H1 (cell line): ENCODE measurements at regions of chr13 and their contacts with region 1.

Region 1: DNA sequence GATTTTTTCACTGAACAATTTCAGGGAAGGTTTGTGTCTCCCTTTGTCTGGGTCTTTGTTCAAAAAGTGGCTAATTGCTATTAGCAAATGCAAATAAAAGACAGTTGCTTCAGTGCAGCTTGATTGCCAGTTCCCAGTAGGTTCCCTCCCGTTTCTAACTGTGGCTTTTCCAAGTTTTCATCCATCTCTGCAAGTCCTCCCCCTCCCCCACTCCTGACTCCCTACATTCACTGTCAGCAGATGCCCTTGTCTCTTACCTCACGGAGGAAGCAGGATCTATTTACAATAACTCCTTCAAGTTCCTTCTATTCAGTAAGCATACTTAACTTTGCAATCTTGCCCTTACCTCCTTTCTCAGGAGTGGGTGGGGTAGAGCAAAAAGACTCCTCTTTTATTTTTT is 55.4 kb upstream of the SCEL start:
- DNase-seq: peak in 1 of 2 experiments; percentile 9
- H3K4me3 ChIP-seq: no peak overlapping the region
- H3K27ac ChIP-seq: no peak overlapping the region
- H3K4me1 ChIP-seq: peaks cover 2 to 5% (median 4%) of the 10 kb centered on the region in 4 experiments; a peak in 4 of 7 replicates
- H3K27me3 ChIP-seq: no peaks in the 10 kb centered on the region
- CTCF ChIP-seq: no peak
- EP300 ChIP-seq: no peak
- POLR2A ChIP-seq: no peak
- RAD21 ChIP-seq: no peak

Region 2: GRCh38 chr13:77316430-77316829 is 163.6 kb before region 1 on chr13:
- CTCF ChIA-PET with region 1: interaction called, 12 read pairs
- POLR2A ChIA-PET with region 1: interaction called, 3 read pairs
- DNase-seq: no peak
- H3K4me3 ChIP-seq: no peak overlapping the region
- H3K27ac ChIP-seq: no peak overlapping the region
- H3K4me1 ChIP-seq: peaks cover 0 to 5% (median 4%) of the 10 kb centered on the region in 4 experiments; a peak in 4 of 7 replicates
- H3K27me3 ChIP-seq: no peaks in the 10 kb centered on the region
- CTCF ChIP-seq: no peak
- EP300 ChIP-seq: no peak
- POLR2A ChIP-seq: no peak
- RAD21 ChIP-seq: no peak

Region 3: GRCh38 chr13:77384999-77385398 is 95.1 kb before region 1 on chr13:
- CTCF ChIA-PET with region 1: interaction called, 11 read pairs
- POLR2A ChIA-PET with region 1: interaction called, 3 read pairs
- DNase-seq: no peak
- H3K4me3 ChIP-seq: no peak overlapping the region
- H3K27ac ChIP-seq: no peak overlapping the region
- H3K4me1 ChIP-seq: peaks cover 0 to 12% (median 0%) of the 10 kb centered on the region in 4 experiments; a peak in 1 of 7 replicates
- H3K27me3 ChIP-seq: no peaks in the 10 kb centered on the region
- CTCF ChIP-seq: no peak
- EP300 ChIP-seq: no peak
- POLR2A ChIP-seq: no peak
- RAD21 ChIP-seq: no peak

Region 4: DNA sequence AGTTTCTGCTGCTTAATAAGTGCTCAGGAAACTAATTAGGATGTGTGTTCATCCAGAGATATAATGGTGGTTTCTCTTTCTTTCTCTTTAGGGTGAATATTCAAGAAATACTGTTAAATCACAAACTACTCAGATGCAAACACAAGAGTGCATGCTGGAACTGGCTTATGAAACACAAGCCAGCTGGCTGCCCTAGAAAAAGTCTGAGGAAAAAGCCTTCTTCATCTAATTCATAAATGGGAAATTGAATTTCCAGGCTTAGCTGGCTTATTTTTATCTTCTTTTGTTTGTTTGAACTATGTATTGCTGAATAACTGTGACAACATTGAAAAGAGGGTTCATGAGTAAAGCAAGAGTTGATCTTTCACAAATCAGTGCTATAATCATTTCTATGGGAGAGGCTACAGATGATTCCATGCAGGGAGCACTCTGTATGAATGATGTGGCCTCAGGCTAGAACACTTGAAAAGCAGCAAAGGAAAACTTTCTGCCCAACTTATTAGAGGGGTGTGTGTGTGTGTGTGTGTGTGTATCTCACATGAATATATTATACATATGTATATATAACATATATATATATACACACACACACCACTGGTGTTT is 14.4 kb before region 1 on chr13:
- CTCF ChIA-PET with region 1: interaction called, 12 read pairs
- POLR2A ChIA-PET with region 1: interaction called, 3 read pairs
- DNase-seq: no peak
- H3K4me3 ChIP-seq: no peak overlapping the region
- H3K27ac ChIP-seq: no peak overlapping the region
- H3K4me1 ChIP-seq: no peaks in the 10 kb centered on the region
- H3K27me3 ChIP-seq: no peaks in the 10 kb centered on the region
- CTCF ChIP-seq: no peak
- EP300 ChIP-seq: no peak
- POLR2A ChIP-seq: no peak
- RAD21 ChIP-seq: no peak

Region 5: GRCh38 chr13:77502104-77502720 is 22.1 kb after region 1 on chr13:
- CTCF ChIA-PET with region 1: interaction called, 23 read pairs
- POLR2A ChIA-PET with region 1: no interaction called
- DNase-seq: no peak
- H3K4me3 ChIP-seq: no peak overlapping the region
- H3K27ac ChIP-seq: no peak overlapping the region
- H3K4me1 ChIP-seq: no peaks in the 10 kb centered on the region
- H3K27me3 ChIP-seq: no peaks in the 10 kb centered on the region
- CTCF ChIP-seq: no peak
- EP300 ChIP-seq: no peak
- POLR2A ChIP-seq: no peak
- RAD21 ChIP-seq: no peak